HepG2 (cell line): ENCODE measurements at regions of chr11 and their contacts with region 1.

Region 1: GRCh38 chr11:100930185-100930778 is 199.3 kb downstream of the PGR start:
- DNase-seq: peak; percentile 46
- ATAC-seq: peak; percentile 58; the same call in 2 of the 3 replicates
- H3K4me3 ChIP-seq: no peak overlapping the region
- H3K27ac ChIP-seq: no peak overlapping the region
- H3K4me1 ChIP-seq: no peaks in the 10 kb centered on the region
- H3K27me3 ChIP-seq: no peaks in the 10 kb centered on the region
- CTCF ChIP-seq: peak; percentile 63
- EP300 ChIP-seq: no peak
- POLR2A ChIP-seq: no peak
- RAD21 ChIP-seq: no peak

Region 2: GRCh38 chr11:100240025-100240539 is 690.2 kb before region 1 on chr11:
- CTCF ChIA-PET with region 1: no interaction called
- POLR2A ChIA-PET with region 1: no interaction called
- in situ Hi-C with region 1: no loop called
- intact Hi-C with region 1: no loop called
- DNase-seq: no peak
- ATAC-seq: no peak
- H3K4me3 ChIP-seq: no peak overlapping the region
- H3K27ac ChIP-seq: no peak overlapping the region
- H3K4me1 ChIP-seq: no peaks in the 10 kb centered on the region
- H3K27me3 ChIP-seq: no peaks in the 10 kb centered on the region
- CTCF ChIP-seq: no peak
- EP300 ChIP-seq: no peak
- POLR2A ChIP-seq: no peak
- RAD21 ChIP-seq: no peak

Region 3: GRCh38 chr11:100575870-100576705 is 354.2 kb before region 1 on chr11:
- CTCF ChIA-PET with region 1: interaction called, 17 read pairs
- POLR2A ChIA-PET with region 1: no interaction called
- in situ Hi-C with region 1: loop called (anchors 5 kb)
- intact Hi-C with region 1: loop called (anchors 1 kb)
- DNase-seq: peak; percentile 41
- ATAC-seq: peak; percentile 80
- H3K4me3 ChIP-seq: no peak overlapping the region
- H3K27ac ChIP-seq: no peak overlapping the region
- H3K4me1 ChIP-seq: no peaks in the 10 kb centered on the region
- H3K27me3 ChIP-seq: no peaks in the 10 kb centered on the region
- CTCF ChIP-seq: peak; percentile 73
- EP300 ChIP-seq: no peak
- POLR2A ChIP-seq: no peak
- RAD21 ChIP-seq: peak; percentile 53; the same call in 1 of the 2 replicates

Region 4: GRCh38 chr11:100681064-100681502 is 249.2 kb before region 1 on chr11:
- CTCF ChIA-PET with region 1: interaction called, 3 read pairs
- POLR2A ChIA-PET with region 1: no interaction called
- in situ Hi-C with region 1: no loop called
- intact Hi-C with region 1: loop called (anchors 2 kb)
- DNase-seq: peak; percentile 76
- ATAC-seq: peak; percentile 90
- H3K4me3 ChIP-seq: no peak overlapping the region
- H3K27ac ChIP-seq: no peak overlapping the region
- H3K4me1 ChIP-seq: peaks cover 38% of the 10 kb centered on the region
- H3K27me3 ChIP-seq: no peaks in the 10 kb centered on the region
- CTCF ChIP-seq: no peak
- EP300 ChIP-seq: no peak; a peak in 1 of 4 replicates
- POLR2A ChIP-seq: no peak
- RAD21 ChIP-seq: no peak

Region 5: DNA sequence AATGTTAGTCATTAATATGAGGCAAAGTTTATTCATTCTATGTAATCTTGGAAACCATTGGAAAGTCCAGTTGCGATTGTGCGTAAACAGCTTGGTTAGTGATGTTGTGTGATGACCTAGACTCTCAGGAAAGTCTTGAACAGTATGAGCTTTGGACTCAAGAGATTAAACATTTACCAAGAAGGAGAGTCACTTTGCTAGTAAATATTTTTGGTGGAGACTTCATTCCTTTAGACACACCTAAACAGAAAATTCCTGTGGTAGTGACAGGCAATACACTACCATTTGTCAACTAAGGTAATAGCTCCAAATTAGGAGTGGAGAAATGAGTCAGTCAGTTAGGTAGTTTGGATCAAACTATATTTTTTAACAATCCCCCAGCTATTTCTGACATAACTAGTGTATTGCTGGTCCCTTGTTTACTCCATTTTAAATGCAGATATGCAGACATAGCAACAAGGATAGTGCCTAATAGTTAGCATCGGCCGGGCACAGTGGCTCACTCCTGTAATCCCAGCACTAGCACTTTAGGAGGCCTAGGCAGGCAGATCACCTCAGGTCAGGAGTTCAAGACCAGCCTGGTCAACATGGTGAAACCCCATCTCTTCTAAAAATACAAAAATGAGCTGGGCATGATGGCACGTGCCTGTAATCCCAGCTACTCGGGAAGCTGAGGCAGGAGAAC is 153.9 kb before region 1 on chr11:
- CTCF ChIA-PET with region 1: no interaction called
- POLR2A ChIA-PET with region 1: no interaction called
- in situ Hi-C with region 1: no loop called
- intact Hi-C with region 1: no loop called
- DNase-seq: peak; percentile 74
- ATAC-seq: peak; percentile 78
- H3K4me3 ChIP-seq: no peak overlapping the region; a peak in 1 of 6 replicates
- H3K27ac ChIP-seq: peak overlapping the region; percentile 52
- H3K4me1 ChIP-seq: peaks cover 40% of the 10 kb centered on the region
- H3K27me3 ChIP-seq: no peaks in the 10 kb centered on the region
- CTCF ChIP-seq: no peak
- EP300 ChIP-seq: peak in 1 of 2 experiments; percentile 50; a peak in 1 of 4 replicates
- POLR2A ChIP-seq: no peak
- RAD21 ChIP-seq: no peak

Region 6: GRCh38 chr11:100827934-100828661 is 102.2 kb before region 1 on chr11:
- CTCF ChIA-PET with region 1: no interaction called
- POLR2A ChIA-PET with region 1: no interaction called
- in situ Hi-C with region 1: no loop called
- intact Hi-C with region 1: no loop called
- DNase-seq: peak; percentile 80
- ATAC-seq: peak; percentile 99
- H3K4me3 ChIP-seq: no peak overlapping the region
- H3K27ac ChIP-seq: no peak overlapping the region
- H3K4me1 ChIP-seq: peaks cover 17% of the 10 kb centered on the region
- H3K27me3 ChIP-seq: no peaks in the 10 kb centered on the region
- CTCF ChIP-seq: peak; percentile 65
- EP300 ChIP-seq: no peak
- POLR2A ChIP-seq: no peak
- RAD21 ChIP-seq: peak; percentile 58

Region 7: DNA sequence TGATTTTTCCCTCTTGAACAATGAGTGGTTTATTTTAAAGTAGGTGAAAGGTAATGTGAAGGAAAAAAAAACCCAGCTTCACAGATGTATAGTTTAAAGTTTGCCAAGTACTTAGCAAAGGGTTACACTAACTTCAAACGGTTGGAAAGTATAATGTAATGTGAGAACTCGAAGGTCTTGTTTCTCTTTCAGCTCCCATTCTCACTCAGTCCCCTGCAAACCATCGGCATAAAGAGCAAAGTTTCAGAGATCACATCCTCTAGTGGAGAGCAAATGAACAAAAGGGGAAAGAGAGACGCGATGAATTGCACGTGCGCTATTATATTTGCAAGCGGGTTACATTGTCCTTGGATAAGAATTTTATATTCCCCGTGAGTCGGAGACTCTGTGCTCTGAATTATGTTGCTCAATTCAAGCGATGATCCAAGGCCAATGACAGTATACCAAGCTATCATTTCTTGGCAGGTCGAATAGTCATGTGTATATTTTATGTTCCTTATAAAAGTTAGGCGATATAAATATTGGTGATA is 1349.4 kb after region 1 on chr11:
- CTCF ChIA-PET with region 1: no interaction called
- POLR2A ChIA-PET with region 1: no interaction called
- in situ Hi-C with region 1: no loop called
- intact Hi-C with region 1: no loop called
- DNase-seq: peak; percentile 98
- ATAC-seq: peak; percentile 97
- H3K4me3 ChIP-seq: peak overlapping the region in 2 of 3 experiments; percentile 4 to 42; a peak in 2 of 6 replicates
- H3K27ac ChIP-seq: peak overlapping the region; percentile 91
- H3K4me1 ChIP-seq: peaks cover 94% of the 10 kb centered on the region
- H3K27me3 ChIP-seq: no peaks in the 10 kb centered on the region
- CTCF ChIP-seq: peak; percentile 48
- EP300 ChIP-seq: peak; percentile 70 to 93; a peak in 3 of 4 replicates
- POLR2A ChIP-seq: no peak
- RAD21 ChIP-seq: peak; percentile 46; the same call in 1 of the 2 replicates